Activated CD8-positive, alpha-beta memory T cell treated with anti-CD3 and anti-CD28 coated beads, Interleukin-2, amount 10 ng/mL, durations not matched to agents 7 days and 5 days (primary cell): ENCODE measurements at regions of chr1 and their contacts with region 1.

Region 1: GRCh38 chr1:92476071-92476631 is 10.6 kb downstream of the GFI1 start:
- DNase-seq: peak; percentile 86
- ATAC-seq: peak; percentile 62
- H3K4me3 Mint-ChIP-seq: peak overlapping the region; percentile 31
- H3K27ac Mint-ChIP-seq: peak overlapping the region; percentile 81
- H3K4me1 Mint-ChIP-seq: peaks cover 87% of the 10 kb centered on the region
- H3K27me3 Mint-ChIP-seq: no peaks in the 10 kb centered on the region

Region 2: GRCh38 chr1:92317836-92318493 is 158.2 kb before region 1 on chr1:
- CTCF ChIA-PET with region 1: interaction called, 296 read pairs
- DNase-seq: peak; percentile 60
- ATAC-seq: peak; percentile 72
- H3K4me3 Mint-ChIP-seq: peak overlapping the region; percentile 55
- H3K27ac Mint-ChIP-seq: peak overlapping the region; percentile 84
- H3K4me1 Mint-ChIP-seq: peaks cover 69% of the 10 kb centered on the region
- H3K27me3 Mint-ChIP-seq: no peaks in the 10 kb centered on the region